OCI-LY7 (cell line): ENCODE measurements at regions of chr5 and their contacts with region 1.

Region 1: GRCh38 chr5:56670118-56670483 is 145.2 kb upstream of the MAP3K1 start:
- DNase-seq: peak; percentile 98
- H3K4me3 ChIP-seq: peak overlapping the region; percentile 57
- H3K27ac ChIP-seq: peak overlapping the region; percentile 97
- H3K4me1 ChIP-seq: peaks cover 65% of the 10 kb centered on the region
- CTCF ChIP-seq: no peak

Region 2: DNA sequence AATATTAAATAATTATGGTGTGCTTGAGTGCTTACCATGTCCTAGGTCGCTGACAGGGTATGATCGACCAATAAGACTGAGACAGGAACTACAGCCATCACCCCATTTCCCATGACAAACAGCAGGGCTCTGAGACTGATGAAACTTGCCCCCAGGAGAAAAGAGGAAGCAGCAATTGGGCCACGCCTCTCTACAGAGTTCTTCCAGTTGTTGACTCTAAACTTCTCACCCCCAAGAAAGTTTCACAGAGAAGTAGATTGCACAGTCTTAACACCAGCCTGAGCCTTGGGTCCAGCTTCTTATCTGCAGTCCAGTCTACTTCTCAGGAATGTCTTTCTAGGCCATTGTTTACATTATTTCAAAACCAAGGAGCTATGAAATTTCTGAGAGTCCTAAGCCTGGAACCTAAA is 254.7 kb before region 1 on chr5:
- CTCF ChIA-PET with region 1: no interaction called
- POLR2A ChIA-PET with region 1: interaction called, 21 read pairs
- intact Hi-C with region 1: loop called (anchors 5 kb)
- DNase-seq: peak; percentile 93
- H3K4me3 ChIP-seq: peak overlapping the region; percentile 58
- H3K27ac ChIP-seq: peak overlapping the region; percentile 84
- H3K4me1 ChIP-seq: peaks cover 50% of the 10 kb centered on the region
- CTCF ChIP-seq: no peak

Region 3: DNA sequence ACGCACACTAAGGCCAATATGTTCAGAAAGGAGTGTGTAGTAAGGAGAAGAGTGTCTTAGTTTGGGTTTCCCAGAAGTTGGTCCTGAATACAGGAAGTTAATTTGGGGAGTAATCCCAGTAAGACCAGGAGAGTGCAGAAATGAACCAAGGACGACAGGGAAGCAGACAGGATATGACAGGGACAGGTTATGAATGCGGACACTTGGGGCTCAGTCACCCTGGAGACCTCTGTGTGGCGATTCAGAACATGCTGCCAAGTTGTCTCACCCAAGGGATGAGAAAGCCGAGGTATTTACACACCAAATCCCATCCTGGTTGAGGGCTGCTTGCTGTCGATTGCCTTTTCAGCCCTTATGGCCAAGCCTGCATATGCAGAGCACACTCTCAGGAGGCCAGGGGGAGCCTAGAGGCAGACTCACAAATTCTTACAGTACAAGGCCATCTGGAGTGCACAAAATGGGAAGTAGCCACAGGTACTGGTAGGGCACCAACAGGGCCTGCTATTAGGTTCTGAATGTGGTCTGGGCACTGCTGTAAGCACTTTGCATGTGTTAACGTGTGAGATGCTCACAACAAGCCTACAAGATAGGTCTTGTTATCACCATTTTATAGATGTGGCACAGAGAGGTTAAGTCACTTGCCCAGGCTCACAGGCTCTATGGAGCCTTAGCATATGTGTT is 203.8 kb before region 1 on chr5:
- CTCF ChIA-PET with region 1: no interaction called
- POLR2A ChIA-PET with region 1: no interaction called
- intact Hi-C with region 1: no loop called
- DNase-seq: peak; percentile 8
- H3K4me3 ChIP-seq: no peak overlapping the region
- H3K27ac ChIP-seq: no peak overlapping the region
- H3K4me1 ChIP-seq: no peaks in the 10 kb centered on the region
- CTCF ChIP-seq: no peak

Region 4: DNA sequence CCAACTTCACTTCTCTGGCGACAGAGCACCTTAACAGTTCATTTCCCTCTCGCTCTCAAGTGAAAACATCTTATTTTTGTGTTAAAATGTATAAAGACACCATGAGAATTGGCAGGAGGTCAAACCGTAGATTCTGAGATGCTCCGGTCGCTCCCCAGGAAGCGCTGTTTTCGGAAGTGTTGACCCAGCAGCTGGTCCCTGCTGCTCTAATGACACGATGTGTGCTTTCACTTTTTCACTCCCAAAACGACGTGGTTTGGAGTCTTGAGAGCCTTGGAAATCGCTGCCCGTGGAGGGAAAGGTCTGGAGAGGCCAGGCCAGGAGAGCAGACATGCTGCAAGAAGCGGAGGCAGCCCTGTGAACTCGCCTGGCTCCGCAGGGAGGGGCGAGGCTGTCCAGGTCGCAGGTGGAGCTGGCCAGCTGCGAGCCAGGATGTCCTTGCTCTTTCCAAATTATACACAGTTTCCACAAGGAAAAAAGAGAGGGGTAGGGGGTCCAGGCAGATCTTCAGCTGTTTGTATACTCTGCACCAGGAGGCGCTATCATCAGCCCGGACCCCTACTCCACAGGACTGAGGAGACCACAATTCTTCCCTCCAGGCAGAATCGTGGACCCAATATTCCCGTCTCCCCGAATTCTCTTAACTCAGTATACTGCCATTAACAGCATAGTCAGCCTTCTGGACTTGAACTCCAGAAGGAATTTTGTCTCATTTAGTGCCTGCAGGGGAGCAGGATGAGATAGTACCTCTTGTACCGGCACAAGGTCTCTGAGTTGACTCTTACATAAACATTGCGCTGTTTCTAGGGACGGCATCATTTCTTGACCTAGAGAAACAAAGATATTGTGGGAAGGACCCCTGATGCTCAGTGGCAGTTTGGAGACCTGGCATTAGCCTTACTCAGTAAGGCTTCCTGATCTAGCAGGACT is 188.4 kb before region 1 on chr5:
- CTCF ChIA-PET with region 1: no interaction called
- POLR2A ChIA-PET with region 1: interaction called, 8 read pairs
- intact Hi-C with region 1: loop called (anchors 1 kb)
- DNase-seq: peak; percentile 56
- H3K4me3 ChIP-seq: peak overlapping the region; percentile 65
- H3K27ac ChIP-seq: peak overlapping the region; percentile 60
- H3K4me1 ChIP-seq: peaks cover 40% of the 10 kb centered on the region
- CTCF ChIP-seq: peak; percentile 81

Region 5: DNA sequence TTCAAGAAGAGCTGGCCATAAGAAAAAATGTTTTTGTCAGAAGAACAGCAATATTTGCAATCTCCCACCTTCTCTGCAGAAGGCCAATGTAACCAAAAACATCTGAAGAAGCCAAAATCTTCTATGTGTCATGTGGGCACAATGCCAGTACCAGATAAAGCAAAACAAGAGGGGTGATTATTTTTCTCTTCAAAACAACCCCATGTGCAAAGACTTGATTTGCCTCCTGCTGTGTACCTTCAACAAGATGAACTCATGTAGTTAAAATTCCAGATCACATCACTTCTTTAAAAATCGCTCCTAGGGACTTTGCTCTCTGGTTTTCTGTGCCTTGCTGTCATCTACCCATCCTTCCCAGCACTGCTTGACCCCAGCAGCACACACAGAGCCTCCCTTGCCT is 11.2 kb after region 1 on chr5:
- CTCF ChIA-PET with region 1: interaction called, 4 read pairs
- POLR2A ChIA-PET with region 1: interaction called, 126 read pairs
- intact Hi-C with region 1: loop called (anchors 1 kb)
- DNase-seq: no peak
- H3K4me3 ChIP-seq: no peak overlapping the region
- H3K27ac ChIP-seq: no peak overlapping the region
- H3K4me1 ChIP-seq: peaks cover 45% of the 10 kb centered on the region
- CTCF ChIP-seq: no peak

Region 6: GRCh38 chr5:56737002-56737621 is 67.0 kb after region 1 on chr5:
- CTCF ChIA-PET with region 1: no interaction called
- POLR2A ChIA-PET with region 1: interaction called, 24 read pairs
- intact Hi-C with region 1: loop called (anchors 2 kb)
- DNase-seq: peak; percentile 46
- H3K4me3 ChIP-seq: peak overlapping the region; percentile 31
- H3K27ac ChIP-seq: peak overlapping the region; percentile 86
- H3K4me1 ChIP-seq: peaks cover 57% of the 10 kb centered on the region
- CTCF ChIP-seq: no peak

Region 7: DNA sequence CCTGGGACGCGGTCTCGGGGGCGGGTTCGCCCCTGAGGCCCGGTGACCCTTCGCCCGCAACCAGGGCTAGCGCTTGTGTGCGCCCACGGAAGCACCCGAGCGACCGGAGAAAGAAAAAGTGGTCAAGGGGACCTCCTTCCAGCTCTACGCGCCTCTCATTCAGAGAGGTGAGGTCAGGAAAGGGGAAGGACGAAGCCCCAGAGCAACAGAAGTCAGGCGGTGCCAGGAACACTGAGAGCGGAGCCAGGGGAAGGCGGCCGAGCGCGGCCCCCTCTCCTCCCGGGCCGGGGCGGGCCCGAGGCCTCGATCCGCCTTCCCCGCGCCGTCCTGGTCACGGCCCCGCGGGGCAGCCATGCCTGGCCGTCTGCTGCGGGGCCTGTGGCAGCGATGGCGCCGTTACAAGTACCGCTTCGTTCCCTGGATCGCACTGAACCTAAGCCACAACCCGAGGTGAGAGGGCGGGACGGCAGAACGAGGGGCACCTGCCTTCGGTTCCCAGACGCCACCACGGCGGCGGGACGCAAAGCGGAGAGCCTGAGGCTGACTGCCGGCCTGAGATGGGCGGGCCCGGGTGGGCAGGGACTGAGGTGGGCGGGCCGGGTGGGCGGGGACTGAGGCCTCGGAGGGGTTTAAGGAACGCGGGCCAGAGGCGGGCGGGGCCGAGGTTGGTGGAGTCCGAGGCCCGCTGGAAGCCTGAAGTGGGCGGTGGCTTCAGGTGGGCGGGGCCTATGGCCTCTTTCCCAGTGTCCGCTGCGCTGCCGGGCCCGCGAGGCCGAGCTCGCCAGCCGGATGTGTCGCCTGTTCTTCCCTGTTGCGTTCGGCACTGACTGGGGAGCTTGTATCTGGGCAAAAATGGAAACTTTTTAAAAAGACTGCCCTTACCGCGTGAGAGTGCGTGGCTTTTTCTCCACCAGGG is 239.5 kb after region 1 on chr5 and contains the start of gene SETD9:
- CTCF ChIA-PET with region 1: no interaction called
- POLR2A ChIA-PET with region 1: interaction called, 3 read pairs
- intact Hi-C with region 1: loop called (anchors 2 kb)
- DNase-seq: peak; percentile 98
- H3K4me3 ChIP-seq: peak within 1 kb of the TSS; percentile 76
- H3K27ac ChIP-seq: peak within 1 kb of the TSS; percentile 77
- H3K4me1 ChIP-seq: peaks cover 21% of the 10 kb centered on the region
- CTCF ChIP-seq: no peak
- total RNA-seq, gene SETD9: 5.0 and 6.7 TPM in 2 replicates